ENCODE measurements at regions of chr3 and their contacts with region 1.

Region 1: GRCh38 chr3:68057637-68058320 is 403.4 kb upstream of the SUCLG2 start:
- DNase-seq: peak; percentile 33 to 91 (median 66)
- ATAC-seq: peak; percentile 98
- H3K4me3 ChIP-seq: peak overlapping the region in 1 of 2 experiments; percentile 38
- H3K4me3 Mint-ChIP-seq: peak overlapping the region; percentile 59
- H3K27ac ChIP-seq: peak overlapping the region; percentile 6 to 44
- H3K27ac Mint-ChIP-seq: peak overlapping the region; percentile 79
- H3K4me1 ChIP-seq: peaks cover 59% of the 10 kb centered on the region
- H3K4me1 Mint-ChIP-seq: peaks cover 75% of the 10 kb centered on the region
- H3K27me3 ChIP-seq: no peaks in the 10 kb centered on the region
- H3K27me3 Mint-ChIP-seq: no peaks in the 10 kb centered on the region
- CTCF ChIP-seq: no peak

Region 2: GRCh38 chr3:67947808-67948508 is 109.8 kb before region 1 on chr3:
- CTCF ChIA-PET with region 1: interaction called, 3 read pairs
- POLR2A ChIA-PET with region 1: interaction called, 4 read pairs
- intact Hi-C with region 1: loop called in 1 of 2 experiments (anchors 2 kb)
- DNase-seq: peak; percentile 50 to 89 (median 77)
- ATAC-seq: peak; percentile 95
- H3K4me3 ChIP-seq: peak overlapping the region; percentile 42 to 45
- H3K4me3 Mint-ChIP-seq: peak overlapping the region; percentile 84
- H3K27ac ChIP-seq: peak overlapping the region; percentile 2 to 32
- H3K27ac Mint-ChIP-seq: peak overlapping the region; percentile 92
- H3K4me1 ChIP-seq: peaks cover 20% of the 10 kb centered on the region
- H3K4me1 Mint-ChIP-seq: peaks cover 39% of the 10 kb centered on the region
- H3K27me3 ChIP-seq: no peaks in the 10 kb centered on the region
- H3K27me3 Mint-ChIP-seq: no peaks in the 10 kb centered on the region
- CTCF ChIP-seq: peak; percentile 18

Region 3: DNA sequence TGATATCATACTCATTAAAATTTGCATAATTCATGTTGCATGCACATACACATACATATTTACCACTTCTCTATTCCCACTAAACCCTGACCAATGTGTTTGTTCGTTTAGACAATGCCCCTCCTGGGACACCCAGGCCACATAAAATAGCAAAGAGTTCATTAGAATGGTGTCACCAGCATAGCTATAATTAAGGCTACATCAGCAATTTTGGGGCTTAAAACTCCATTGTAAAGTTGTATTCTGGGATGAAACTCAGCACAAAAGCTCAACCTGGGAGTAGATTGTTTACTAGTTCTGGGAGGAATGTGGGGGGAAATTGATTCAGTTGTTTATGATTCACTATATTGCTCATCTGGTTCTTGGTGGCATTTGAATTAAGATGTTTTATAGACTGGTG is 118.8 kb after region 1 on chr3:
- CTCF ChIA-PET with region 1: no interaction called
- POLR2A ChIA-PET with region 1: no interaction called
- intact Hi-C with region 1: no loop called
- DNase-seq: no peak
- ATAC-seq: no peak
- H3K4me3 ChIP-seq: no peak overlapping the region
- H3K4me3 Mint-ChIP-seq: no peak overlapping the region
- H3K27ac ChIP-seq: no peak overlapping the region
- H3K27ac Mint-ChIP-seq: no peak overlapping the region
- H3K4me1 ChIP-seq: no peaks in the 10 kb centered on the region
- H3K4me1 Mint-ChIP-seq: no peaks in the 10 kb centered on the region
- H3K27me3 ChIP-seq: no peaks in the 10 kb centered on the region
- H3K27me3 Mint-ChIP-seq: no peaks in the 10 kb centered on the region
- CTCF ChIP-seq: no peak